MCF 10A (cell line): ENCODE measurements at regions of chr1 and their contacts with region 1.

Region 1: DNA sequence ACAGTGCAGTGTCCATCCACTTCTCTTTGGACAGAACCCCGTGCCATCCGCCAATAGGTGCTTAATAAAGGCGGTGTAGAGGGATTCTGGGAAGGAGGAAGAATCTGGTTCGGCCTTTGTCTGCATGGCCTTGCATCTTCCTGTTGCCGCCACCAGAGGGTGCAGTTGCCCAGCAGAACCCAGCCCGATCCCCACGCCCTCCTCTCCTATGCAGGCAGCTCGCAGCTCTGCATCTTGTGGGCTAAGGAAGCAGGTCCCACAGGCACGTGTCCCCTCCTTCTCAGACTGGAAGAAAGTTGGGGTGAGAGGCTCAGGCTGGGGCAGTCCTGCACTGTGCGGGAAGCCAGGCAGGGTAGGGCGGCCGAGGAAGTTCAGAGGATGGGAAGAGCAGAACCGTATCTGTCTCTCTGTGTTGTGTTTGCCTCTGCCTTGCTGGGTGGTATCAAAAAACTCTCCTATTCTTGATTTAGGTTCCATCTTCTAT is 20.8 kb downstream of the NAV1 start:
- DNase-seq: peak; percentile 89
- H3K4me3 Mint-ChIP-seq: no peak overlapping the region
- H3K27ac Mint-ChIP-seq: peak overlapping the region; percentile 35
- H3K4me1 Mint-ChIP-seq: peaks cover 48% of the 10 kb centered on the region
- H3K27me3 Mint-ChIP-seq: no peaks in the 10 kb centered on the region
- CTCF ChIP-seq: peak; percentile 100

Region 2: DNA sequence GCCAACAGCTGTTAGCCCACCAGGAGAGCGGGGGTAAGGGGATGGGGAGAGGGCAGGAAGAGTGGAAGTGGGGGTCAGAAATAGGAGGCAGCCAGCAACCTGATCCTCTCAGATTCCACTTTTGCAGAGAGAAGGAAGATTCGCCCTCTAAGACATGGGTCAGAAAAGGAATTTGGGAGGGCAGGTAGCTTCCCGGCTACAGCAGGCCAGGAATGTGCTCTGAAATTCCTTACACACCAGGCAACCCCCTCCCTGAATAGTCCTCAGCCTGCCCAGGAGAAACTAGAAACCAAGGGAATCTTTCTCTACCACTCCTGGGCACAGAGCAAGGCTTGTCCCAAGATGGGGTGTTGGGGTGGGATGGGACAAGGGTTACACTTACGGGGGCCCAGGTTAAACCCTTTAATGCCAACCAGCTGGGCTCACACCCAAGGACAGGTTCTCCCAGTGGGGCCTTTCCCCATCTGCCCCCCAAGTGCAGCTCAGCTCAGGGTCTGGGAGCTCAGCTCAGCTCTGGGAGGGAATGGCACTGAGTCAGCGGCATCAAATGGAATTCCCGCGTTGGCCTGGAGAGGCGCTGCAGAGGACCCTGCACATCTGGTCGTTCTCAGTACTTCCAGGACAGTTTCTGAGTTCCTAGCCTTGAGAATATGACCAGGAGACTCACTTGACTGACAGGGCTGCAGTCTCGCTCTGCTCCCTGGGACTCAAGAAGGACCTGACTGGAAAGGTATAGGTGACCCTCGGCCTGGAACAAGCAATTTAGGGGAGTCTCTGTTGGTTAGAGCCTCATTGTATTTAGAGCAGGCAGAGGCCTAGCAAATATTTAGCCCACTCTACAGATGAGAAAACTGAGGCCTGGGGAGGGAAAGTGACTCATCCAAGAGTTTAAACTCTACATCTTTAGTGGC is 183.0 kb before region 1 on chr1:
- CTCF ChIA-PET with region 1: no interaction called
- POLR2A ChIA-PET with region 1: no interaction called
- intact Hi-C with region 1: no loop called
- DNase-seq: peak; percentile 80
- H3K4me3 Mint-ChIP-seq: no peak overlapping the region
- H3K27ac Mint-ChIP-seq: no peak overlapping the region
- H3K4me1 Mint-ChIP-seq: no peaks in the 10 kb centered on the region
- H3K27me3 Mint-ChIP-seq: peaks cover 37% of the 10 kb centered on the region
- CTCF ChIP-seq: peak; percentile 67

Region 3: GRCh38 chr1:201538612-201539551 is 20.8 kb before region 1 on chr1 and contains the start of gene NAV1:
- CTCF ChIA-PET with region 1: interaction called, 120 read pairs
- POLR2A ChIA-PET with region 1: interaction called, 6 read pairs
- intact Hi-C with region 1: no loop called
- DNase-seq: peak; percentile 56
- H3K4me3 Mint-ChIP-seq: peak within 1 kb of the TSS; percentile 70
- H3K27ac Mint-ChIP-seq: no peak within 1 kb of the TSS
- H3K4me1 Mint-ChIP-seq: peaks cover 35% of the 10 kb centered on the region
- H3K27me3 Mint-ChIP-seq: no peaks in the 10 kb centered on the region
- CTCF ChIP-seq: no peak
- total RNA-seq, gene NAV1: 31.4 and 34.9 TPM in 2 replicates

Region 4: DNA sequence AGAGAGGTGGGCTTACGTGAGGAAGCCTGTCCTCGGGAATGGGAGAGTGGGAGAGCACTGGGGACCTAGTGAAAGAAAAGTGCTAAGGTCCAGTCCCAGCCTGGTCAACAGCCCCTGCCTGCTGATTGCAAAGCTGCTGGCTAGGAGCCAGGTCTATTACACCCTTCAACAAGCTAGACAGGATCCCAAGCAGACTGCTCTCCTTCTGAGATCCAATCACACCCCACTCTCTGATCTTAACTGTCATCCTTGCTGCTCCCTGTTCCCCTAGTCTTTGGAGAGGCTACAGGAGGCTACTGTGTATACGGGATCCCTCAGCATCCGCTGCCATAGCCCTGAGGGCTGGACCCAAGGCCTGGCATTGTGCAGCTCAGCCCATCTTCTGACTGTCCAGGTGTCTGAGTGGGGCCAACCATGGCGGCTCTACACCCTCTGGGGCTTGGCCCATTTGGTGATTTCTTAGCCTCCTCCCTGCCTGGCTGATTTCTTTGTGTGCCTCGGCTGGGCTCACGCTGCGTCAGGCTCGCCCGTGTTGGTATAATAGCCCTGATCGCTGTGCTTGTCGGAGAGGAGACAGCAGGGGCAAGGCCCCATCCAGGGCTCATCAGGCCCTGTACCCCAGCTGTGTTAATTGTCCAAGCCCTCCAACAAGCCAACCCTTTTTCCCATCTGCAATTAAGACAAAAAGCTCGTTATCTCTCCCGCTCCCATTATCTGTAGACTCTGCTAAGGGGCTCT is 23.2 kb after region 1 on chr1:
- CTCF ChIA-PET with region 1: interaction called, 66 read pairs
- POLR2A ChIA-PET with region 1: interaction called, 4 read pairs
- intact Hi-C with region 1: no loop called
- DNase-seq: peak; percentile 60
- H3K4me3 Mint-ChIP-seq: no peak overlapping the region
- H3K27ac Mint-ChIP-seq: no peak overlapping the region
- H3K4me1 Mint-ChIP-seq: peaks cover 28% of the 10 kb centered on the region
- H3K27me3 Mint-ChIP-seq: peaks cover 12% of the 10 kb centered on the region
- CTCF ChIP-seq: no peak

Region 5: DNA sequence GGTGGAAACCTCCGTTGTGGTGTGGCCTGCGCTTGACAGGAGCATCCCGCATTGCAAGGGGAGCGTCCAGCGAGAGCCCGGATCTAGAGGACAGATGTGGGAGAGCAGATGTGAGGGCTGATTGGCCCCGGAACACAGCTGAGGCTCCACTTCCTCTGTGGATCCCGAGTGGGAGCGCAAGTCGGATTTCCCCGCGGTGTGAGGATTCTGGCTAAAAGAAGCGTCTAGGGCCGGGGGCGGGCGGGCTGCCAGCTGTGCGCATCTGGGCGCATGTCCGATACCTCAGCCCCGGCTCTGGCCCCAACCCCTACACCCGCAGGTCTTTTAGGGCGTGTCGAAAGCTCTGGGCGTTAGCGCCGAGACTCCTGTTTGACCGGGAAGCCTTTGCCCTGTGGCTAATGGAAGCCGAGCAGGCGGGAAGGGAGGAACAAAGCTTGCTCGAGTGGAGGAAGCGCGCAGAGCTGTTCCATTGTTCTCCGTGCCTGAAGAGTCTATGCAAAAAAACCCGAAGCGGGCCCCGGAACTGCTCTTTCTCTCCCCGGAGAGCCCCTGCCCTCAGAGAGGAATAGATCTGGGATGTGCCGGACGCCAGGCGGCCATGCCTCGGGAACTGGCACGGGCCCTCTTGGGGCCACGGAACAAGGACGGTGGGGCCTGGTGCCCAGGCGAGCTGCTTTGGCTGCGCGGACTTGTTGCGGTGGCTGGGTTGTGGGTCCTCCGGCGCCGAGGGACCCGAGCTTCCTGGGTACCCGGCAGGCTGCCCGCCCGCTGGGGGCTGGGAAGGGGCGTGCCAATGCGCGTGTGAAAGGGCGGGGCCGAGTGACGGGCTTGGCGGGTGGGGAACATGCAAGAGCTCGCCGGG is 90.3 kb after region 1 on chr1:
- CTCF ChIA-PET with region 1: interaction called, 9 read pairs
- POLR2A ChIA-PET with region 1: no interaction called
- intact Hi-C with region 1: loop called (anchors 1 kb)
- DNase-seq: peak; percentile 85
- H3K4me3 Mint-ChIP-seq: peak overlapping the region; percentile 80
- H3K27ac Mint-ChIP-seq: peak overlapping the region; percentile 79
- H3K4me1 Mint-ChIP-seq: peaks cover 15% of the 10 kb centered on the region
- H3K27me3 Mint-ChIP-seq: no peaks in the 10 kb centered on the region
- CTCF ChIP-seq: no peak

Region 6: GRCh38 chr1:201696217-201696761 is 136.6 kb after region 1 on chr1:
- CTCF ChIA-PET with region 1: interaction called, 779 read pairs
- POLR2A ChIA-PET with region 1: interaction called, 10 read pairs
- intact Hi-C with region 1: loop called (anchors 2 kb)
- DNase-seq: peak; percentile 100
- H3K4me3 Mint-ChIP-seq: peak overlapping the region; percentile 28
- H3K27ac Mint-ChIP-seq: peak overlapping the region; percentile 44
- H3K4me1 Mint-ChIP-seq: peaks cover 32% of the 10 kb centered on the region
- H3K27me3 Mint-ChIP-seq: no peaks in the 10 kb centered on the region
- CTCF ChIP-seq: peak; percentile 6

Region 7: GRCh38 chr1:201766131-201766866 is 206.6 kb after region 1 on chr1:
- CTCF ChIA-PET with region 1: interaction called, 10 read pairs
- POLR2A ChIA-PET with region 1: no interaction called
- intact Hi-C with region 1: no loop called
- DNase-seq: peak; percentile 97
- H3K4me3 Mint-ChIP-seq: peak overlapping the region; percentile 1
- H3K27ac Mint-ChIP-seq: peak overlapping the region; percentile 5
- H3K4me1 Mint-ChIP-seq: peaks cover 49% of the 10 kb centered on the region
- H3K27me3 Mint-ChIP-seq: no peaks in the 10 kb centered on the region
- CTCF ChIP-seq: no peak

Region 8: GRCh38 chr1:201818971-201819750 is 259.4 kb after region 1 on chr1:
- CTCF ChIA-PET with region 1: interaction called, 15 read pairs
- POLR2A ChIA-PET with region 1: no interaction called
- intact Hi-C with region 1: no loop called
- DNase-seq: no peak
- H3K4me3 Mint-ChIP-seq: no peak overlapping the region
- H3K27ac Mint-ChIP-seq: no peak overlapping the region
- H3K4me1 Mint-ChIP-seq: no peaks in the 10 kb centered on the region
- H3K27me3 Mint-ChIP-seq: no peaks in the 10 kb centered on the region
- CTCF ChIP-seq: no peak